ENCODE measurements at regions of chr7 and their contacts with region 1.

Region 1: GRCh38 chr7:11127114-11127835 is 153.6 kb downstream of the PHF14 start:
- DNase-seq: no peak
- H3K4me3 Mint-ChIP-seq: no peak overlapping the region
- H3K27ac Mint-ChIP-seq: no peak overlapping the region
- H3K4me1 Mint-ChIP-seq: peaks cover 23% of the 10 kb centered on the region
- H3K27me3 Mint-ChIP-seq: no peaks in the 10 kb centered on the region

Region 2: DNA sequence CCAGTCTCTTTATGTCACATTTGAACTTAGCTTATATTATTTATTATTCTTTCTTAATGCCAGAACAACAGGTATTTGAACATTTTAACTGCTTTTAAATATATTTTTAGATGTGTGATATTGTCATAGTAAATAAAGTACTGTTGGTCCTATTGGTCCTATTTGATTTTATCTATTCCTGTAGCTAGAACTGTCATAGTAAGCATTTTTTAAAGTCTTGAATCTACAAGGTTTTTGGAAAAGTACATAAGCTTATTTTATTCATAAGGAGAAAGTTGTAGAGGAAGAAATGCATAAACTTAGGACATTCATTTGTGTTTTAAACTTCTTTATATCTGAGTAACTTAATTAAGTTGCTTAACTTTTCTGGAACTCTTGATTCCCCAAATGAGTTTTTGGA is 17.6 kb before region 1 on chr7:
- CTCF ChIA-PET with region 1: no interaction called
- POLR2A ChIA-PET with region 1: no interaction called
- intact Hi-C with region 1: no loop called
- DNase-seq: no peak
- H3K4me3 Mint-ChIP-seq: no peak overlapping the region
- H3K27ac Mint-ChIP-seq: no peak overlapping the region
- H3K4me1 Mint-ChIP-seq: no peaks in the 10 kb centered on the region
- H3K27me3 Mint-ChIP-seq: no peaks in the 10 kb centered on the region

Region 3: DNA sequence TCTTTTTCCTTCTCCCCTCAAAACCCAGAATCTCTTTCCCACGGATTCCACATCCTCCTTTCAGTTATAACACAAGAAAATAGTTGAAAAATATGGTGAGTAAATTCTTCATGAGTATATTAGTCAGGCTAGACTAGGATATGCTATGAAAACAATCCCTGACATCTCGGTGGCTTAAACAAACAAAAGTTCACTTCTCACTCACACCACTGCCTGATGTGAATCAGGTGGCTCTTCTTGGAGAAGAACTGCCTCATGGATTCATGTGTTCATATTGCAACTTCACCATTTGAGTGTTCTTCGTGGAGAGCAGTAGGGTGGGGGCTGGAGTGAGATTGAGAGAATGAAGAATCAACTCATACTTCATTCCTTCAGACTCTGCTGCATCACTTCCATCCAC is 50.5 kb after region 1 on chr7:
- CTCF ChIA-PET with region 1: no interaction called
- POLR2A ChIA-PET with region 1: no interaction called
- intact Hi-C with region 1: loop called (anchors 5 kb)
- DNase-seq: peak; percentile 12
- H3K4me3 Mint-ChIP-seq: no peak overlapping the region
- H3K27ac Mint-ChIP-seq: no peak overlapping the region
- H3K4me1 Mint-ChIP-seq: no peaks in the 10 kb centered on the region
- H3K27me3 Mint-ChIP-seq: no peaks in the 10 kb centered on the region

Region 4: DNA sequence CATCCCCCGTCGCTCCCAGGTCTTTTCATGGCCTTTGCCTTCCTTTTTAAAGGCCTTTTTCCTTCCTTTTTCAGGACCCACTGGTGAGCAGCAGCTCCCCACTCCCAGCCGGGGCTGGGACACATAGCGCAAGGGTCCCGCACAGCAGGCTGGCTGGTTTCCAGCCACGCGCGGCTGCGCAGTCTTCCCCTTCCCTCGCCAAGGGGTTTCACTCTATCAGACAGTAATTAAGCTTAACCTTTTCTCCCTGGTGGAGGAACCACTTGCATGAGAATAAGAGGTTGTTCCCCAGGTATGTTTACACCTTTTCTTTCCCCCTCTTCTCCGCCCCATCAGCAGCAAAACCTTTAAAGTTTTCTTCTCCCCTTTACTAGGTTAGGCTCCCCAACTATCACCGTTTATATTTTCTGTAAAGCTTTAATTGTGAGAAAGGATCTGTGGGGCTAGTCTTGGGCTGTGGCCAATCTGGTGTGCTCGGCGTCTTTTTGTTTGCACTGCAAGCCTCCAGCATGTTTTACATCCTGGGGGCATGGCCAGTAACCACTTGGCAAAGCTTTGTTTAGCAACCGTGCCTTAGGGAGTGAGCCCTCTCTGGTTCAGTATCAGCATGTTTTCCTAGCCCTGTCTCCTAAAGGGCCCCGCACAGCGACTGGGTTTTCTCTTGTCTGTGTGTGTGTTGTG is 66.0 kb after region 1 on chr7:
- CTCF ChIA-PET with region 1: no interaction called
- POLR2A ChIA-PET with region 1: no interaction called
- intact Hi-C with region 1: loop called (anchors 5 kb)
- DNase-seq: no peak
- H3K4me3 Mint-ChIP-seq: no peak overlapping the region
- H3K27ac Mint-ChIP-seq: no peak overlapping the region
- H3K4me1 Mint-ChIP-seq: peaks cover 8% of the 10 kb centered on the region
- H3K27me3 Mint-ChIP-seq: peaks cover 7% of the 10 kb centered on the region